Endothelial cell of umbilical vein (primary cell): ENCODE measurements at regions of chr16 and their contacts with region 1.

Region 1: DNA sequence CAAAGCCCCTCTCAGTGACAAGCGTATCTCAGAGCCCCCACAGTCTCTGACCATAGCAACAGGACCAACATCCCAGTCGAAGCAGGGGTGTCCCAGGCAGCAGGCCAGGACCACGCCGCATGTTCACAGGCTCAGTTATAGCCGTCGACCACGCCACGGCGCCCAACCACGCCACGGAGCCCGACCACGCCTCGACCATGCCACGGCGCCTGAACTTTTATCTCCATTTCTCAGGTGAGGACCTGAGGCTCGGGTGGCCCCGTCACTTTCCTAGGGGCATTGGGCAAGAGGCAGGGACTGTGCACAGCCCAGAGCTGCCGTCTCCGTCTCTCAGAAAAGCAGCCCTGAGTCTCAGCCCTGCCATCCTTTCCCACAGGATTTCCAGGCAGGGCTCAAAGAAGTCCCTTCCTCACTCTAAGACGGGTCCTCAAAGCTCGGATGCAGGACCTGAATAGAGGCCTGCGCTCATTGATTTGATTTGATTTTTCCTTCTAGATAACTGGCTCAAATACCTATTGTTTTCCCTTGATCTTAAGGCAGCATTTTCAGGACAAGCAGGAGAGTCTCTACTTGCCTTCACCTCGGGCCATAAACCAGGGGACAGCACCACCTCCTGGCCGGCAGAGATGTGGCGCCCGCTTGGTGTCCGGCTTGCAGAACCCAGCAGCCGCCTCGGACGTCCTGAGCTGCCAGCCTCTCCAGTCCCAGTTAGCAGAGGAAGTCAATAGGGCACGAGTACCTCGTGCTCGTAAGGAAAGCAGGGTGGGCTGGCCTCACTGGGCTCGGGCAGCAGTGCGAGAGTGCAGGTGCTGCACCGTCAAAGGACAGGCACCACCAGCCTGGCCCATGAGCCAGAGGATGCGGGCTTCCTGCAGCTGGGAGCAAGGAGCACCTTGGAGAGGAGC is 38.7 kb downstream of the C16orf95 start:
- DNase-seq: peak; percentile 86
- H3K4me3 ChIP-seq: no peak overlapping the region
- H3K27ac ChIP-seq: no peak overlapping the region
- H3K4me1 ChIP-seq: peaks cover 4% of the 10 kb centered on the region
- H3K27me3 ChIP-seq: no peaks in the 10 kb centered on the region
- CTCF ChIP-seq: peak; percentile 92 to 94
- POLR2A ChIP-seq: no peak

Region 2: GRCh38 chr16:86575754-86576557 is 702.5 kb before region 1 on chr16:
- CTCF ChIA-PET with region 1: interaction called, 10 read pairs
- POLR2A ChIA-PET with region 1: no interaction called
- dilution Hi-C with region 1: no loop called
- intact Hi-C with region 1: no loop called
- DNase-seq: peak; percentile 92
- H3K4me3 ChIP-seq: peak overlapping the region; percentile 33 to 67 (median 62)
- H3K27ac ChIP-seq: peak overlapping the region; percentile 82
- H3K4me1 ChIP-seq: peaks cover 56% of the 10 kb centered on the region
- H3K27me3 ChIP-seq: no peaks in the 10 kb centered on the region
- CTCF ChIP-seq: peak; percentile 73 to 74
- POLR2A ChIP-seq: peak; percentile 83

Region 3: DNA sequence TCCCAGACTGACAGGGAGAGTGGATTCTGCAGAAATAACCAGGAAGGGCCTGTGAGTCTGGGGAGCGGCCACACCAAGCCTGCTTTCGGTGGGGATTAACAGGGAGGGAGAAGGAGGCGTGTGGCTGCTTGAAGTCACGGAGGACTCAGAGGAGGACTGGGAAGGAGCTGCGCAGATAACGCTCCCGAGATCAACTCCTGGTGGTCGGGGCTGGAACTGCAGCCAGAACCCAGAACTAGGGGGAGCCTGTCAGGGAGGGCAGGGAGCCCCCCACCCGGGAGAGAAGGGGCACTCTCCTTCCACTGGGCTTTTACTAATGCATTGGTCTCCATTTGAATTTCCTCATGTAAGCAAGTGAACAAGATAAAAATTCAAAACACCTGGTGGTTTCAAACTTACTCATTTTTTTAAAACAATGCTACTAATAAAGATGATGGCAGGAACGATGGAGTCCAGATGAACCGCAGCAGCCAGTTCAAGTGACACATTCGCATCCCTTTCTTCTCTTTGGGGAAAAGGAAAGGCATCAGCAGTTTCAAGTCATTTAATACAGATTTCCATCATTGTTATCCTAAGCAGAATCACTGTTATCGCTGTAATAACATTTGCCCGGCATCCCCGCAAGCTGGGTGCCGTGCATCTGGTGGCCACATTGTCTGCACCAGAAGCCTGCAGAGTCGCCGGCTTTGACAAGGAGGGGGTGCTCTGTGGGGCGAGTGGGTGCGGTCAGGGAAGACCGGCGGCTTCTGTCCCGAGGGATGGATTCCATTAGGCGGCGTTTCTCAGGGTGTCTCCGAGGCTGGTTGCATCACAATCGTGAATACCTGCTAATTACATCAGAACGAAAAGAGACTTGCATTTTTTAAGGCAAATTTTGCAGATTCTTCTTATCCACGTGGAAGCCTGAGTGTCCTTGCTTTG is 517.1 kb before region 1 on chr16:
- CTCF ChIA-PET with region 1: interaction called, 5 read pairs
- POLR2A ChIA-PET with region 1: no interaction called
- dilution Hi-C with region 1: no loop called
- intact Hi-C with region 1: loop called (anchors 10 kb)
- DNase-seq: peak; percentile 72
- H3K4me3 ChIP-seq: no peak overlapping the region
- H3K27ac ChIP-seq: no peak overlapping the region
- H3K4me1 ChIP-seq: peaks cover 13% of the 10 kb centered on the region
- H3K27me3 ChIP-seq: peaks cover 0 to 8% of the 10 kb centered on the region in 2 experiments
- CTCF ChIP-seq: peak; percentile 91 to 96
- POLR2A ChIP-seq: no peak

Region 4: GRCh38 chr16:87076950-87077749 is 201.3 kb before region 1 on chr16:
- CTCF ChIA-PET with region 1: interaction called, 5 read pairs
- POLR2A ChIA-PET with region 1: no interaction called
- dilution Hi-C with region 1: no loop called
- intact Hi-C with region 1: loop called (anchors 2 kb)
- DNase-seq: peak; percentile 87
- H3K4me3 ChIP-seq: no peak overlapping the region
- H3K27ac ChIP-seq: peak overlapping the region; percentile 52
- H3K4me1 ChIP-seq: peaks cover 11% of the 10 kb centered on the region
- H3K27me3 ChIP-seq: no peaks in the 10 kb centered on the region
- CTCF ChIP-seq: peak; percentile 88 to 91
- POLR2A ChIP-seq: no peak

Region 5: DNA sequence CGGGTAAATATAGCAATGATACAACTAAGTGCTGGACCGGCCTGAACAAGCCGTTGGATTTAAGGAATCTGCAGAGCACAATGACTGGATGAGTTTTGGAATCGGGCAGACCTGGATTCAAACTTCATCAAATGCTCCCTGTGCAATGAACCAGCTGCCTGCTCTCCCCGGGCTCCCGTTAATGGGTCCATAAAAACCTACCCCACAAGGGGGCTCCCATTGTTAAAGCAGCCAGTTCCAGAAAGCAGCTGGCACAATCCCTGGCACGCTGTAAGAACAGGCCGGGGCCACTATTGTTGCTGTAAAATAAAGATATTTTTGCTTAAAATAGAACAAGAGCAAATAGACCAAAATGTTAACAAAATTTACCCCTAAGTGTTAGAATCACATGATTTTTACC is 93.1 kb before region 1 on chr16:
- CTCF ChIA-PET with region 1: interaction called, 7 read pairs
- POLR2A ChIA-PET with region 1: no interaction called
- dilution Hi-C with region 1: no loop called
- intact Hi-C with region 1: loop called (anchors 5 kb)
- DNase-seq: no peak
- H3K4me3 ChIP-seq: no peak overlapping the region
- H3K27ac ChIP-seq: no peak overlapping the region
- H3K4me1 ChIP-seq: peaks cover 10% of the 10 kb centered on the region
- H3K27me3 ChIP-seq: no peaks in the 10 kb centered on the region
- CTCF ChIP-seq: peak in 1 of 2 donors; percentile 23
- POLR2A ChIP-seq: no peak

Region 6: DNA sequence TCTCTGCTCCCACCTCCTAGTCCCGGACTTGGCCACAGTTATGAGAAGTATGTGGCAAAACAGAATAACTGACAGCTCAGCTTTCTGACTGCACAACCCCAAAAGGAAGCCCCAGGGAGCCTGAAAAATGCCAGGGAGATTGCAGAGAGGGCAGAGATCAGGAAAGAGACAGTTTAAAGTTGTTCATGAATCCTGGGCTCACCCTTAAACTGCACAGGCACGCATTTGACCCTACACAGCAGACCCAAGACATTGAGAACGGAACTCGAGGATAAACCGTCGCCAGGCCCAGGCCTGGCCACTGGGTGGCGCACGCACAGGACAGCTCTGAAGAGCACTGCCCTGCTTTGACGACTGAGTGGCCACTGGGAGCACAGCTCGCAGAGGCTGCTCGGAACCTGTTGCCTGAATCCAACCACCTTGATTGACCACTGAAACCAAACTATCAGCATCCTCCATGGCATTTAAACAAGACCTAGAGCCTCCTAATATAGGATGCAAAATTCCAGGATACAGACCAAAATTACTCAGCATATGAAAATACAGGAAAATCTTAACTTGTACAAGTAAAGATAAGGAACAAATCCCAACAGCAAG is 75.3 kb before region 1 on chr16:
- CTCF ChIA-PET with region 1: interaction called, 35 read pairs
- POLR2A ChIA-PET with region 1: no interaction called
- dilution Hi-C with region 1: no loop called
- intact Hi-C with region 1: loop called (anchors 1 kb)
- DNase-seq: peak; percentile 77
- H3K4me3 ChIP-seq: no peak overlapping the region
- H3K27ac ChIP-seq: no peak overlapping the region
- H3K4me1 ChIP-seq: no peaks in the 10 kb centered on the region
- H3K27me3 ChIP-seq: peaks cover 0 to 9% of the 10 kb centered on the region in 2 experiments
- CTCF ChIP-seq: peak; percentile 97 to 98
- POLR2A ChIP-seq: no peak

Region 7: GRCh38 chr16:87297918-87298631 is 19.6 kb after region 1 on chr16:
- CTCF ChIA-PET with region 1: interaction called, 13 read pairs
- POLR2A ChIA-PET with region 1: no interaction called
- dilution Hi-C with region 1: no loop called
- intact Hi-C with region 1: no loop called
- DNase-seq: peak; percentile 44
- H3K4me3 ChIP-seq: no peak overlapping the region
- H3K27ac ChIP-seq: no peak overlapping the region
- H3K4me1 ChIP-seq: no peaks in the 10 kb centered on the region
- H3K27me3 ChIP-seq: no peaks in the 10 kb centered on the region
- CTCF ChIP-seq: peak; percentile 53 to 77
- POLR2A ChIP-seq: no peak